ENCODE measurements at regions of chr7 and their contacts with region 1.

Region 1: DNA sequence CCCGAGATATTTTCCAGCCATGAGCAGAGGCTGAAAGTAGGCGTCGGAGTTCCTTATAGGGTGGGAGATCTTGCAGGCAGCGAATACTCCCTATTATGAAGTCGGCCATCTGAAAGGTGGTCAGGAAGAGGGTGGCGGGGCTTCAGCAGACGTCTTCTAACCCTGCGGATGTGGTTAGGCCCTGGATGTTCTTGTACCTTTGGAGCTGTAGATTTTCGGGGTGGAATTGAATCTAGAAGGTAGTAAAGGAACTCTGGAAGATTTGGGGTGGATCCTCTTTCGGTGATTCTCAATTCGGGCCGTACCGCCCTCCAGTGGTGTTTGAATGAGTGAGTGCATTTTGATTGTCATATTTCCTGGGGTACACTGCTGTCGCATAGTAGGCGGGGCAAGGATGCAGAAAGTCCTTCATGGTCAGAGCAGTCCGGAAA is 635 bp downstream of the NUP205 start:
- DNase-seq: peak; percentile 66
- H3K4me3 Mint-ChIP-seq: no peak overlapping the region
- H3K27ac Mint-ChIP-seq: no peak overlapping the region
- H3K4me1 Mint-ChIP-seq: peaks cover 17% of the 10 kb centered on the region
- H3K27me3 Mint-ChIP-seq: no peaks in the 10 kb centered on the region
- CTCF ChIP-seq: peak; percentile 42

Region 2: GRCh38 chr7:135281363-135281949 is 276.9 kb before region 1 on chr7:
- CTCF ChIA-PET with region 1: no interaction called
- intact Hi-C with region 1: loop called (anchors 2 kb)
- DNase-seq: peak; percentile 85
- H3K4me3 Mint-ChIP-seq: no peak overlapping the region
- H3K27ac Mint-ChIP-seq: no peak overlapping the region
- H3K4me1 Mint-ChIP-seq: no peaks in the 10 kb centered on the region
- H3K27me3 Mint-ChIP-seq: peaks cover 24% of the 10 kb centered on the region
- CTCF ChIP-seq: peak; percentile 93

Region 3: DNA sequence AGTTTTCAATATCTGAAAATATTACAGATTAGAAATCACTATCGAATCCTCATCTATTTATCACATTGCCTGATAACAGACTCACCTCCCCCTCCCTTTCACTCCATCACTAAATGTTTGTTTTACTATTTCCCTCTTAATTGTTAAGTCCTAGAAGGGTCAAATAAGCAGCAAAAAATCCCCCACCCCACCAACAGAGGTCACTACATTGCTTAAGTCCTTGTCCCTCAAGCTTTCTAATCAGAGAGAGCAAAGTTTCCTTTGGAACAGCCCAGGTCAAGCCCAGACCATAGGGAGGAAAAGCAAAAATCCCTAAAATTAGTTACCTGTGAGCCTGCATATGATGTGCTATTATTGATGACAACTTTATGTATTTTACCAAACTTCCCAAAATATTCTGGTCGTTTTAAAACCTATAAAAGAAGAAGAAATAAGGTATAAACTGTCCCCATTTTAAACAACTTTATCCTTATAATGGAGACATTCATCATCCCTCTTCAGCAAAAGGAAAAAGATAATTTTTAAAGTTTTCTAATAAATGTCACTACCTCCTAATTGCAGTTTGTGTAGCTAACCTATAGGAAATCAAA is 143.4 kb before region 1 on chr7:
- CTCF ChIA-PET with region 1: no interaction called
- intact Hi-C with region 1: loop called (anchors 5 kb)
- DNase-seq: peak; percentile 57
- H3K4me3 Mint-ChIP-seq: no peak overlapping the region
- H3K27ac Mint-ChIP-seq: no peak overlapping the region
- H3K4me1 Mint-ChIP-seq: no peaks in the 10 kb centered on the region
- H3K27me3 Mint-ChIP-seq: no peaks in the 10 kb centered on the region
- CTCF ChIP-seq: peak; percentile 58

Region 4: GRCh38 chr7:135601182-135601581 is 42.8 kb after region 1 on chr7:
- CTCF ChIA-PET with region 1: no interaction called
- intact Hi-C with region 1: no loop called
- DNase-seq: no peak
- H3K4me3 Mint-ChIP-seq: no peak overlapping the region
- H3K27ac Mint-ChIP-seq: no peak overlapping the region
- H3K4me1 Mint-ChIP-seq: no peaks in the 10 kb centered on the region
- H3K27me3 Mint-ChIP-seq: no peaks in the 10 kb centered on the region
- CTCF ChIP-seq: no peak